ENCODE measurements at regions of chr14 and their contacts with region 1.

Region 1: GRCh38 chr14:77059276-77059915 is 30.9 kb upstream of the IRF2BPL start:
- DNase-seq: peak in 1 of 3 donors; percentile 37
- H3K4me3 ChIP-seq: no peak overlapping the region
- H3K4me3 Mint-ChIP-seq: no peak overlapping the region
- H3K27ac ChIP-seq: no peak overlapping the region
- H3K27ac Mint-ChIP-seq: peak overlapping the region in 1 of 7 donors; percentile 10
- H3K4me1 ChIP-seq: no peaks in the 10 kb centered on the region
- H3K4me1 Mint-ChIP-seq: peaks cover 5% of the 10 kb centered on the region
- H3K27me3 ChIP-seq: no peaks in the 10 kb centered on the region
- H3K27me3 Mint-ChIP-seq: peaks cover 3 to 4% (median 3%) of the 10 kb centered on the region in 3 donors
- CTCF ChIP-seq: no peak

Region 2: GRCh38 chr14:77023001-77023996 is 36.1 kb before region 1 on chr14:
- intact Hi-C with region 1: loop called in 1 of 2 experiments (anchors 5 kb)
- DNase-seq: no peak
- H3K4me3 ChIP-seq: no peak overlapping the region
- H3K4me3 Mint-ChIP-seq: no peak overlapping the region
- H3K27ac ChIP-seq: no peak overlapping the region
- H3K27ac Mint-ChIP-seq: peak overlapping the region in 3 of 7 donors; percentile 4 to 47 (median 22)
- H3K4me1 ChIP-seq: peaks cover 23 to 32% of the 10 kb centered on the region in 2 donors
- H3K4me1 Mint-ChIP-seq: peaks cover 29% of the 10 kb centered on the region
- H3K27me3 ChIP-seq: no peaks in the 10 kb centered on the region
- H3K27me3 Mint-ChIP-seq: no peaks in the 10 kb centered on the region
- CTCF ChIP-seq: no peak

Region 3: GRCh38 chr14:77301103-77301502 is 241.7 kb after region 1 on chr14:
- intact Hi-C with region 1: no loop called
- DNase-seq: peak; percentile 33 to 59 (median 41)
- H3K4me3 ChIP-seq: no peak overlapping the region
- H3K4me3 Mint-ChIP-seq: no peak overlapping the region
- H3K27ac ChIP-seq: no peak overlapping the region
- H3K27ac Mint-ChIP-seq: no peak overlapping the region
- H3K4me1 ChIP-seq: peaks cover 5 to 8% of the 10 kb centered on the region in 2 donors
- H3K4me1 Mint-ChIP-seq: peaks cover 17% of the 10 kb centered on the region
- H3K27me3 ChIP-seq: no peaks in the 10 kb centered on the region
- H3K27me3 Mint-ChIP-seq: no peaks in the 10 kb centered on the region
- CTCF ChIP-seq: peak; percentile 76